Panc1 (cell line): ENCODE measurements at regions of chr11 and their contacts with region 1.

Region 1: GRCh38 chr11:11895672-11896071 is 53.9 kb downstream of the USP47 start:
- DNase-seq: no peak
- ATAC-seq: no peak
- H3K4me3 ChIP-seq: no peak overlapping the region
- H3K27ac ChIP-seq: no peak overlapping the region
- H3K4me1 ChIP-seq: no peaks in the 10 kb centered on the region; the same call in 1 of the 2 replicates
- H3K27me3 ChIP-seq: no peaks in the 10 kb centered on the region
- CTCF ChIP-seq: peak; percentile 26; the same call in 1 of the 2 replicates

Region 2: GRCh38 chr11:12110201-12110713 is 214.6 kb after region 1 on chr11 and contains the start of gene MICAL2:
- CTCF ChIA-PET with region 1: interaction called, 13 read pairs
- POLR2A ChIA-PET with region 1: no interaction called
- in situ Hi-C with region 1: no loop called
- intact Hi-C with region 1: no loop called
- DNase-seq: no peak
- ATAC-seq: peak; percentile 98
- H3K4me3 ChIP-seq: peak within 1 kb of the TSS; percentile 75 to 91
- H3K27ac ChIP-seq: peak within 1 kb of the TSS; percentile 88
- H3K4me1 ChIP-seq: peaks cover 26% of the 10 kb centered on the region
- H3K27me3 ChIP-seq: no peaks in the 10 kb centered on the region
- CTCF ChIP-seq: no peak
- total RNA-seq, gene MICAL2: 199 TPM